H1 (cell line): ENCODE measurements at regions of chr16 and their contacts with region 1.

Region 1: DNA sequence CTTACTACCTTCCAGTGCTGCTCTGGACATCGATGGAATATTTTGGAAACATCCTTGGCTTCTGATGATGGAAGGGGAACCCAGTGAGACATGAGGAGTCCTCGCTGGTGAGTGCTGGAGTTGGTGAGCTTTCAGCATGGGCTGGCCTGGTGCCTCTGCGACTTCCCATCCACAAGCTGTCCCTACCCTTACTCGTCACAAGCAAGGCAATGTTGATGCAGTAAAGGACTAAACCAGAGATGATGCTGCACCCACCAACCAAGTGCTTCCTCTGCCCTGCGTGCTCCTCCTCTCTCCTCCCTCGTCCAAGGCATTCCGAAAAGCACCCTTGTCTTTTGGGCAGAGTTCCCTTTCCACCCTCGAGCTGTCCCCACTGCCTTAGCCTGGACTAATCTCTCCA is 154.7 kb downstream of the GRIN2A start:
- DNase-seq: no peak
- H3K4me3 ChIP-seq: no peak overlapping the region
- H3K27ac ChIP-seq: no peak overlapping the region
- H3K4me1 ChIP-seq: no peaks in the 10 kb centered on the region
- H3K27me3 ChIP-seq: no peaks in the 10 kb centered on the region
- CTCF ChIP-seq: no peak
- EP300 ChIP-seq: no peak
- POLR2A ChIP-seq: no peak
- RAD21 ChIP-seq: no peak

Region 2: DNA sequence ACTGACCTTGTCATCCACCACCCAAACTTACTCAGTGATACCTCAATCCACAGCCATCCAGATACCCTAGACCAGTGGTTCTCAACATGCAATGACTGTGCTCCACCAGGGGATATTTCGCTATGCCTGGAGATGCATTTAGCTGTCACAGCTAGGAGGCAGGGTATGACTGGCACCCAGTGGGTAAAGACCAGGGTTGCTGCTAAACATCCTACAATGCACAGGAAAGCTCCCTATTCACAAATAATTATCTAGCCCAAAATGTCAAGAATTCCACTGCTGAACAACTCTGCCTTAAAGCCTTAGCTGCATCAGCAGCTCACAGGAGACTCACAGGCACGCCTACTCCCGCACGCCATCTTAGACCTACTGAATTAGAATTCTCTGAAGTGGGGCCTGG is 58.0 kb before region 1 on chr16:
- CTCF ChIA-PET with region 1: no interaction called
- POLR2A ChIA-PET with region 1: no interaction called
- DNase-seq: no peak
- H3K4me3 ChIP-seq: no peak overlapping the region
- H3K27ac ChIP-seq: no peak overlapping the region
- H3K4me1 ChIP-seq: peaks cover 0 to 3% (median 1%) of the 10 kb centered on the region in 4 experiments; a peak in 3 of 7 replicates
- H3K27me3 ChIP-seq: peaks cover 0 to 17% (median 4%) of the 10 kb centered on the region in 4 experiments; a peak in 3 of 7 replicates
- CTCF ChIP-seq: peak; percentile 23 to 53 (median 38)
- EP300 ChIP-seq: no peak
- POLR2A ChIP-seq: no peak
- RAD21 ChIP-seq: peak; percentile 50 to 68

Region 3: DNA sequence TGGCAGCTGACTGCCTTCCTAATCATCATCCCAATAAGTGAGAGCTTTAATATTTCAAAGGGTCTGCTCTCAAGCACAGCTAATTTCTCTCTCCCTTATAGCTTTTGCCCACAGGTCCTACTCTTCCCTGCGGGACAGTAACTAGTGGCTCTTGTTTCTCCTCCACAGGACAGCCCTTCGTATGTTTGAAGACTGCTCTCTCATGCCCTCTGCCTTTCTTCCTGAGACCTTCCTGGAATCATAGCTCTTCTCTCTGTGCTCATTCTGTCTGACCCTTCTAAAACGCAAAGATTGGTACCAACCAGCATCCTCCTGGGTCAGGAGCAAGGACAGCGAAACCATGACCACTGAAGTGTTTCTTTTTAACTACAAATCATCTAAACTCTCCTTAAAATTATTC is 14.2 kb before region 1 on chr16:
- CTCF ChIA-PET with region 1: interaction called, 12 read pairs
- POLR2A ChIA-PET with region 1: no interaction called
- DNase-seq: no peak
- H3K4me3 ChIP-seq: no peak overlapping the region
- H3K27ac ChIP-seq: no peak overlapping the region
- H3K4me1 ChIP-seq: no peaks in the 10 kb centered on the region
- H3K27me3 ChIP-seq: no peaks in the 10 kb centered on the region
- CTCF ChIP-seq: peak in 2 of 3 experiments; percentile 35 to 44; a peak in 2 of 4 replicates
- EP300 ChIP-seq: no peak
- POLR2A ChIP-seq: no peak
- RAD21 ChIP-seq: peak; percentile 59 to 63

Region 4: GRCh38 chr16:10045291-10045775 is 17.8 kb after region 1 on chr16:
- CTCF ChIA-PET with region 1: no interaction called
- POLR2A ChIA-PET with region 1: no interaction called
- DNase-seq: no peak
- H3K4me3 ChIP-seq: no peak overlapping the region
- H3K27ac ChIP-seq: no peak overlapping the region
- H3K4me1 ChIP-seq: peaks cover 0 to 3% (median 0%) of the 10 kb centered on the region in 4 experiments; a peak in 1 of 7 replicates
- H3K27me3 ChIP-seq: no peaks in the 10 kb centered on the region; a peak in 1 of 7 replicates
- CTCF ChIP-seq: no peak
- EP300 ChIP-seq: no peak
- POLR2A ChIP-seq: no peak
- RAD21 ChIP-seq: no peak